ENCODE measurements at regions of chr15 and their contacts with region 1.

Region 1: DNA sequence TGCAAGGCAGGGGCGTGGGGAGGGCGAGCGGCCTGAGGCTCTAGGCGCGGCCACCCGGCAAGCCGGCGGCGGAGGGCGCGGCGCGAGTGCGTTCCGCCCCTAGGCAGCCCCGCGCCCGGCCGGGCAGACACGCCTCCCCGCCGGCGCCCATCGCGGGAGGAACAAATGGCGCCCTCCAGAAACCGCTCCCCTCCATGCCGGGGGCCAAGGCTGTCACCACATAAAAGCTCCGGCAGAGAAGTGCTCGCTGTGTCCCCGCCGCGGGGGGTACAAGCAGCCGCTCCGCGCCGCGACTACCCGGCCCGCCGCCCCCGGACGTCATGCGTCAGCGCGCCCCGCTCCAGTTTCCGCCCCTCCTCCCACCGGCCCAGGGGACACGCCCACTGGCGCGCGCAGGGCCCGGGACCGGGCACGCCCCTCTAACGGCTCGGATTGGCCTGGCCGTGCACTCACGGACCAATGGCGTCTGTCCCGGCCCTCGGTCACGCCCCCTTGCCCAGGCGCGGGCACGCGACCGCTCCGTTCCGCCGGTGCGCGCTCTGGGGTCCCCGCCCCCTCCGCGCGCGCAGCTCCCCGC is 391 bp upstream of the KLF13 start:
- DNase-seq: peak; percentile 95 to 100 (median 99)
- ATAC-seq: peak; percentile 89 to 93 (median 92)
- H3K4me3 ChIP-seq: peak overlapping the region; percentile 42 to 96 (median 84)
- H3K27ac ChIP-seq: peak overlapping the region; percentile 98 to 100 (median 100)
- H3K4me1 ChIP-seq: peaks cover 0 to 50% (median 38%) of the 10 kb centered on the region in 12 donors
- H3K27me3 ChIP-seq: no peaks in the 10 kb centered on the region
- CTCF ChIP-seq: peak in 1 of 12 donors; percentile 5
- POLR2A ChIP-seq: peak; percentile 68 to 95

Region 2: GRCh38 chr15:30889196-30889595 is 437.0 kb before region 1 on chr15:
- intact Hi-C with region 1: no loop called
- DNase-seq: no peak
- ATAC-seq: peak in 1 of 4 donors; percentile 41
- H3K4me3 ChIP-seq: no peak overlapping the region
- H3K27ac ChIP-seq: no peak overlapping the region
- H3K4me1 ChIP-seq: peaks cover 0 to 6% (median 0%) of the 10 kb centered on the region in 12 donors
- H3K27me3 ChIP-seq: peaks cover 0 to 3% (median 0%) of the 10 kb centered on the region in 9 donors
- CTCF ChIP-seq: no peak
- POLR2A ChIP-seq: no peak

Region 3: GRCh38 chr15:30991255-30992072 is 334.8 kb before region 1 on chr15 and contains the start of gene MTMR10:
- intact Hi-C with region 1: loop called in 1 of 10 experiments (anchors 10 kb)
- DNase-seq: peak; percentile 61 to 88 (median 84)
- ATAC-seq: peak; percentile 70 to 98 (median 96)
- H3K4me3 ChIP-seq: peak within 1 kb of the TSS; percentile 82 to 99 (median 94)
- H3K27ac ChIP-seq: peak within 1 kb of the TSS; percentile 89 to 99 (median 96)
- H3K4me1 ChIP-seq: peaks cover 0 to 48% (median 40%) of the 10 kb centered on the region in 12 donors
- H3K27me3 ChIP-seq: no peaks in the 10 kb centered on the region
- CTCF ChIP-seq: no peak
- POLR2A ChIP-seq: peak in 1 of 2 donors; percentile 82
- total RNA-seq, gene MTMR10: 14.4 to 38.9 (median 27.8) TPM

Region 4: DNA sequence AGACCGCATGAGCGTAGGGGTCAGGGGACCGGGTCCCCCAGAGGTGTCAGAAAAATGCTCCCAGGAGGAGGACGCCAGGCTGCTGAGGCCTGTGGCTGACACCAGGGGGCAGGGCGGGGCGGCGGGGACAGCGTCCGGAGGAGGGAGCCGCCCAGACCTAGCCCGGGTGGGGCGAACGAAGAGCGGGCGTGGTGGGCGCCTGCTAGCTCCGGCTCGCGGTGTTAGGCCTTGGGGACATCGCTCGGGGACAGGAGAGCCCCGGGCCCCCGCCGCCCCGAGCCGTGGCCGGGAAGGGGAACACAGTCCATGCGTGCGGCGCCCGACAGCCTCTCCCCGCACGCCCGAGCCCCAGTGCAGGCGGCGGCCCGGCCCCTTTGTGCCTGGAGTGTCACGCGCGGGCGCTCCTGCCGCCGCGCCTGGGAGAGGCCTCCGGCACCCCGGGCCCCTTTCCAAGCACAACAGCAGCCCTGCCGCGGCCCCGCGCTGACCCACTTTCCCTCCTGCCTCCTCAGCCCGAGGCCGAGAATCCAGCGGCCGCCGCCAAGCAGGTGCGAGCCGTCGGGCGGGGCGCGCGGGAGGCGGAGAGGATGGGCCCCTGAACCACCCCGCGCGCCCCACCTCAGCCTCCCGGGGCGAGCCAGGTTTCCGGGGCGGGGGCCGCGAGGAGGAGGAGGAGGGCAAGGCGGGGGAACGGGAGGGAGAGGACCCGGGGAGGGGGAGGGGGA is 110.6 kb before region 1 on chr15:
- intact Hi-C with region 1: loop called (anchors 1 to 5 kb)
- DNase-seq: peak; percentile 81 to 95 (median 88)
- ATAC-seq: peak; percentile 77 to 90 (median 87)
- H3K4me3 ChIP-seq: peak overlapping the region; percentile 44 to 75 (median 65)
- H3K27ac ChIP-seq: peak overlapping the region; percentile 91 to 98 (median 96)
- H3K4me1 ChIP-seq: peaks cover 0 to 67% (median 33%) of the 10 kb centered on the region in 12 donors
- H3K27me3 ChIP-seq: no peaks in the 10 kb centered on the region
- CTCF ChIP-seq: peak; percentile 72 to 98 (median 92)
- POLR2A ChIP-seq: peak in 1 of 2 donors; percentile 36

Region 5: DNA sequence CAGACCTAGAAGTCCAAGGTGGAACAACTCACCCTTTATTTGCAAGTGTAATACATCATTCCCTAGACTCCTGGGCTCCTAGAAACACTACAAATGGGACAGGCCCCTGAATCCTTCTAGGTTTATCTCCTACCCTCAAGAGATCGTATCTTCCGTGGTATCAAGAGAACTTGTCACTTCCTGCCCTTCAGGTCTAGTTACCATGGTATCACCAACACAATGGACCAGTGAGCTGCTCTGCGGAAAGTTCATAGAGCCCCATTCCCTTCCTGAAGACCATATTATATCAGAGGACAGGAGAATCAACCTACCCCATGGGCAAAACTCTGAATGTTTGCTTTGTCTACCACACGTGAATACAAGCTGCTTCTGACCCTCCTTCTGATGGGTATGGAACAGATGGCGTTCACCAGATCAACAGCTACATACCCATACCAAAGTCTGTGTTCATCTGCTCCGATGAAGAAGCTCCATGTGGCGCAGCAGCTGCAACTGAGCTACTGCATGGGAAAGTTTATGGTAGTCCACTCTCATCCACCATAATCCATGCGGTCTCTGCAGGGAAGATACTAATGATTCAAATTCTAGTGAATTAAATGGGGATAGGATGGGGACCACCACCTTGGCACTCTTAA is 84.2 kb before region 1 on chr15:
- intact Hi-C with region 1: loop called in 6 of 10 experiments (anchors 2 to 5 kb)
- DNase-seq: no peak
- ATAC-seq: no peak
- H3K4me3 ChIP-seq: no peak overlapping the region
- H3K27ac ChIP-seq: no peak overlapping the region
- H3K4me1 ChIP-seq: peaks cover 2 to 25% (median 9%) of the 10 kb centered on the region in 12 donors
- H3K27me3 ChIP-seq: no peaks in the 10 kb centered on the region
- CTCF ChIP-seq: no peak
- POLR2A ChIP-seq: no peak

Region 6: GRCh38 chr15:31365655-31366127 is 39.4 kb after region 1 on chr15:
- intact Hi-C with region 1: loop called in 7 of 10 experiments (anchors 1 to 5 kb)
- DNase-seq: peak; percentile 89 to 98 (median 93)
- ATAC-seq: peak; percentile 89 to 92 (median 91)
- H3K4me3 ChIP-seq: peak overlapping the region in 11 of 12 donors; percentile 7 to 47 (median 35)
- H3K27ac ChIP-seq: peak overlapping the region; percentile 87 to 96 (median 92)
- H3K4me1 ChIP-seq: peaks cover 31 to 100% (median 92%) of the 10 kb centered on the region in 12 donors
- H3K27me3 ChIP-seq: no peaks in the 10 kb centered on the region
- CTCF ChIP-seq: peak in 11 of 12 donors; percentile 8 to 66 (median 43)
- POLR2A ChIP-seq: peak in 1 of 2 donors; percentile 31

Region 7: DNA sequence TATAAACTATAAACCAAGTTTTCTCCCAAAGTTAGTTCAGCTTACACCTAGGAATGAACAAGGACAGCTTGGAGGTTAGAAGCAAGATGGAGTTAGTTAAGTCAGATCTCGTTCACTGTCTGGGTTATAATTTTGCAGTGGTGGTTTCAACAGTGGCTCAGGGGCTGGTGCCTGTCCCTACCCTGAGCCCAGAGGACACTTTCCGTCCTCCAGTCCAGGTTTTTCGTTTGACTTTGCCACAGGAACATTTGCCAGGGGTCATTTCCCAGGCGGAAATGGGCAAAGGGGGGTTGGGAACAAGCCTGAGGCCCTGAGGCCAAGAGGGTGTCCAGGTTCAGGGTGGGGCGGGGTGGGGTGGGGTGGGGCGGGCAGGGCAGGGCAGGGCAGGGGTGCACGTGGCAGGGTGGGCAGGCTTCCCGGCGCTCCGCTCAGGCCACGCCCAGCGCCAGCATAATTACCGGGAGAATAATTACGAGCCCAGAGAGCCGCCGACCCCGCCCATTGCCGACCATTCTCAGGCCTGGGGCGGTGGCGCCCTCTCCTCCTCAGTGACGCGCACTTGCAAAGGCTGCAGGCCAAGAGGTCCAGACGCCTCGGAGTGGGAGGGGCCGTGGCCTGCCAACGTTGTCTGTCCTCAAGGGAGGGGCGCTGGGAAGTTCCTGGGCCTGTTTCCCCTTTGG is 70.8 kb after region 1 on chr15:
- intact Hi-C with region 1: loop called in 7 of 10 experiments (anchors 1 to 5 kb)
- DNase-seq: peak; percentile 92 to 96 (median 93)
- ATAC-seq: peak; percentile 88 to 94 (median 94)
- H3K4me3 ChIP-seq: peak overlapping the region in 5 of 12 donors; percentile 0 to 32 (median 13)
- H3K27ac ChIP-seq: peak overlapping the region; percentile 53 to 86 (median 74)
- H3K4me1 ChIP-seq: peaks cover 0 to 40% (median 25%) of the 10 kb centered on the region in 12 donors
- H3K27me3 ChIP-seq: no peaks in the 10 kb centered on the region
- CTCF ChIP-seq: peak in 7 of 12 donors; percentile 9 to 57 (median 37)
- POLR2A ChIP-seq: no peak

Region 8: DNA sequence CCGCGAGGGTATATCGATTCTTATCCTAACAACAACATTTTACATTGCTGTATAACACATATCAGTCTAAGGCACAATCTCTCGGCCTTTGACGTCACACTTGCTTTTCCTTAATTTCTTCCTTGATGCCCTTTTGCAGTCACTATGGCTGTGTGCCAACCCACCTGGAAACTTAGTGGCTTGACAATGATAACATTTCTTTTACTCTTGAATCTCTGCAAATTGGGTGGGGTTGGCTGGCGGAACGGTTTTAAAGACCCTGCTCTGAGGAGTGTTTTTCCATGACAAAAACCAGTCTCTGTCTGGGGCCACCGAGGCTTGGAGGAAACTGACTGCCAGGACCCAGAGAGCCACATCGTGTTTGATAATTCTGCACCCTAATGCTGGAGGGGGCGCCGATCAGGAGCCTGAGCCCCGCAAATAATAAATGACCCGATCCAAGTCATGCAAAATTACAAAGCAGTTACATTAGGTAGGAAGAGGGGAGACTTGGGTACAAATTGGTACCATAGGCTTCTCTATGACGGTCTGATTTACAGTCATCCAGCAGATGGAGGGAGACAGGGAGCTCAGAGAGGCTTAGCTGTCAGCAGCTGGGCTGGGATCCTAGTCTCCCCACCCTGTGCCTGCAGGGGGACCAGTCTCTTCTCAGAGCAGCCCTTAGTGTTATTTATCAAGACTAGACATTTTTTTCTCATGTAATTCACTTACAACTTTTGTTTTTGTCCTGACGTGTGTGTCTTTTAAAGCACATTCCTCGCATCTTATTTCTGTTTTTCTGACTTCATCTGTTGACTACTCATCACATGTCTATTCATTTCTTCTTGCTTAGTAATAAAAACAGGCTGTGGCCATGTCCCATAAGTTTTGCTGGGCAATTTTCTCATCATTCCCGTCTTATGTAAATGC is 116.2 kb after region 1 on chr15:
- intact Hi-C with region 1: loop called in 5 of 10 experiments (anchors 2 to 5 kb)
- DNase-seq: no peak
- ATAC-seq: peak; percentile 41 to 80 (median 55)
- H3K4me3 ChIP-seq: no peak overlapping the region
- H3K27ac ChIP-seq: peak overlapping the region in 8 of 12 donors; percentile 18 to 86 (median 52)
- H3K4me1 ChIP-seq: peaks cover 0 to 42% (median 11%) of the 10 kb centered on the region in 12 donors
- H3K27me3 ChIP-seq: no peaks in the 10 kb centered on the region
- CTCF ChIP-seq: peak in 3 of 12 donors; percentile 17 to 37 (median 27)
- POLR2A ChIP-seq: no peak

Measured in heart left ventricle (tissue), 16 donors.